GM12878 (cell line): ENCODE measurements at regions of chr6 and their contacts with region 1.

Region 1: DNA sequence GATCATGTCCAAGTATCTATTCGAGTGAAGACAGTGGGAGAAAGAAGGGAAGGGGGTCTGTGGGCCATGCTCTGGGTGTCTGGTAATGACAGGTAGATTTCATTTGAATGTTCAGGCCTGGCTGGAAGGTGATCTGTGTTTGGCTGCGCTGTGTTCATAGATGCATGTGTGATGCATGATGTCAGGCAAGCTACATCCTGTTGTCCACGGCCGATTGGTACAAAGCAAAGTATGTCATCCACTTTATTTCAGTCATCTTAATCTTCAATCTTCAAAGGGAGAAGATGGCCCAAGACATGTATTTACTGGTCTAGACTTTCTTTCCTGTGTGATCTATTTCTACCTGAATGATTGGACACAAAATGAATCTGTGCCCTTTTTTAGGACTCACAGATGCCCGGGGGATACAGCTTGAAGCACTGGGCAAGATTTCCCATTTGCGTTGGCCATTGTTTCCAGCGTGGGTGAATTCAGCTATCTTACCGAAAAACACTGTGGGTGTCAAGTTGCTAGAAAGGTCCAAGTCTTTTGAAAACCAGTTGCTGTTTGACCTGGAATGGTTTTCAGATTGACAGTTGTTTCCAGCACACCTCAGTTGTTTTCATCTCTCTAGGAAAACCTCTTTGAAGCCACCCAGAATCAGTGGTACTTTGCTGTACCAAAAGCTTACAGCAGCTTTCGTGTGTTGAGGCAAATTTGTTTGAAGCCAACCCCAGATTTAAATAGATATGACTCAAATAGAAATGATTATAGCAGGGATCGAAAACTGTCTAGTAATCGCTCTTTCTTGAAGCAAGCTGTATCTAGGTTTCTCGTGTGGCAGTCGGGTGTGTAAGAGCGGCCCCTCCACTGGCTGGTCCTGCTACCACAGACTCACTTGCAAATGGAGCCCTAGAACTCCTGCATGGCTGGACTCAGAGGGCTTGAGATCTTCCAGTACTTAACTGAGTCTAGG is 27.2 kb downstream of the DUSP22 start:
- DNase-seq: peak; percentile 95
- ATAC-seq: peak; percentile 50
- H3K4me3 ChIP-seq: peak overlapping the region; percentile 57
- H3K27ac ChIP-seq: peak overlapping the region; percentile 92
- H3K4me1 ChIP-seq: peaks cover 98% of the 10 kb centered on the region
- H3K27me3 ChIP-seq: no peaks in the 10 kb centered on the region
- CTCF ChIP-seq: no peak
- EP300 ChIP-seq: peak; percentile 72 to 85; a peak in 3 of 4 replicates
- POLR2A ChIP-seq: no peak
- RAD21 ChIP-seq: no peak

Region 2: DNA sequence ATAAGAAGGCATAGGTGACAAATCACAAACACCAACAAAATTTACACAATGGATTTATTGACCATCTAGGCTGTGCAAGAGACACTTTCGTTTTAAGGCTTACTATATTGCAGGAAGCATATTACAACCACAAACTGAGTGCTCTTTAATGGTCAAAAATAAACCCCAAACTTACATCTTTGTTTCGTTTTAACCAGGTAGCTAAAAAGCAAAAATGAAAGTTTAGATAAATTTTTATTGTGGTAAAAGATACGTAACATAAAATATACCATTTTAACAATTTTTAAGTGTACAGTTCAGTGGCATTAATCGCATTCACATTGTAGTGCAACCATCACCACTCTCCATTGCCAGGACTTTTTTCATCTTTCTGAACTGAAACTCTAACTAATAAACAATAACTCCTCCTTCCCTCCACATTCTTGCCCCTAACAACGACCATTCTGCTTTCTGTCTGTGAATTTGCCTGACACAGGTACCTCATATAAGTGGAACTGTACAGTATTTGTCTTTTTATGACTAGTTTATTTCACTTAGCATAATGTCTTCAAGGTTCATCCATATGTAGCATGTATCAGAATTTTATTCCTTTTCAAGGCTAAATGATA is 59.4 kb before region 1 on chr6:
- CTCF ChIA-PET with region 1: interaction called, 7 read pairs
- POLR2A ChIA-PET with region 1: interaction called, 4 read pairs
- RAD21 ChIA-PET with region 1: interaction called, 11 read pairs
- SMC1A ChIA-PET with region 1: interaction called, 6 read pairs
- in situ Hi-C with region 1: no loop called
- intact Hi-C with region 1: no loop called
- DNase-seq: peak; percentile 77
- ATAC-seq: peak; percentile 91
- H3K4me3 ChIP-seq: peak overlapping the region; percentile 20
- H3K27ac ChIP-seq: peak overlapping the region; percentile 82
- H3K4me1 ChIP-seq: peaks cover 37% of the 10 kb centered on the region
- H3K27me3 ChIP-seq: no peaks in the 10 kb centered on the region
- CTCF ChIP-seq: no peak
- EP300 ChIP-seq: no peak
- POLR2A ChIP-seq: no peak
- RAD21 ChIP-seq: no peak

Region 3: GRCh38 chr6:298233-299103 is 21.0 kb before region 1 on chr6:
- CTCF ChIA-PET with region 1: interaction called, 46 read pairs
- POLR2A ChIA-PET with region 1: interaction called, 61 read pairs
- RAD21 ChIA-PET with region 1: interaction called, 112 read pairs
- SMC1A ChIA-PET with region 1: interaction called, 221 read pairs
- in situ Hi-C with region 1: no loop called
- intact Hi-C with region 1: loop called (anchors 1 kb)
- DNase-seq: no peak
- ATAC-seq: peak; percentile 32
- H3K4me3 ChIP-seq: peak overlapping the region; percentile 63
- H3K27ac ChIP-seq: peak overlapping the region; percentile 100
- H3K4me1 ChIP-seq: peaks cover 66% of the 10 kb centered on the region
- H3K27me3 ChIP-seq: no peaks in the 10 kb centered on the region
- CTCF ChIP-seq: no peak
- EP300 ChIP-seq: no peak
- POLR2A ChIP-seq: no peak
- RAD21 ChIP-seq: no peak

Region 4: GRCh38 chr6:341914-342831 is 22.7 kb after region 1 on chr6:
- CTCF ChIA-PET with region 1: interaction called, 64 read pairs
- POLR2A ChIA-PET with region 1: interaction called, 150 read pairs
- RAD21 ChIA-PET with region 1: interaction called, 256 read pairs
- SMC1A ChIA-PET with region 1: interaction called, 707 read pairs
- in situ Hi-C with region 1: no loop called
- intact Hi-C with region 1: loop called (anchors 1 kb)
- DNase-seq: peak; percentile 92
- ATAC-seq: peak; percentile 72
- H3K4me3 ChIP-seq: peak overlapping the region; percentile 46; the same call in 1 of the 2 replicates
- H3K27ac ChIP-seq: peak overlapping the region; percentile 86
- H3K4me1 ChIP-seq: peaks cover 88% of the 10 kb centered on the region
- H3K27me3 ChIP-seq: no peaks in the 10 kb centered on the region
- CTCF ChIP-seq: no peak
- EP300 ChIP-seq: peak; percentile 99
- POLR2A ChIP-seq: no peak
- RAD21 ChIP-seq: 0 out of 2 replicates have a peak, but pooled peaks have one; percentile 34

Region 5: GRCh38 chr6:364609-365540 is 45.4 kb after region 1 on chr6:
- CTCF ChIA-PET with region 1: interaction called, 8 read pairs
- POLR2A ChIA-PET with region 1: interaction called, 3 read pairs
- RAD21 ChIA-PET with region 1: interaction called, 17 read pairs
- SMC1A ChIA-PET with region 1: interaction called, 13 read pairs
- in situ Hi-C with region 1: no loop called
- intact Hi-C with region 1: no loop called
- DNase-seq: peak; percentile 78
- ATAC-seq: peak; percentile 94
- H3K4me3 ChIP-seq: no peak overlapping the region
- H3K27ac ChIP-seq: peak overlapping the region; percentile 33
- H3K4me1 ChIP-seq: peaks cover 25% of the 10 kb centered on the region
- H3K27me3 ChIP-seq: no peaks in the 10 kb centered on the region
- CTCF ChIP-seq: no peak
- EP300 ChIP-seq: peak; percentile 37 to 88; a peak in 2 of 4 replicates
- POLR2A ChIP-seq: no peak
- RAD21 ChIP-seq: 0 out of 2 replicates have a peak, but pooled peaks have one; percentile 2

Region 6: DNA sequence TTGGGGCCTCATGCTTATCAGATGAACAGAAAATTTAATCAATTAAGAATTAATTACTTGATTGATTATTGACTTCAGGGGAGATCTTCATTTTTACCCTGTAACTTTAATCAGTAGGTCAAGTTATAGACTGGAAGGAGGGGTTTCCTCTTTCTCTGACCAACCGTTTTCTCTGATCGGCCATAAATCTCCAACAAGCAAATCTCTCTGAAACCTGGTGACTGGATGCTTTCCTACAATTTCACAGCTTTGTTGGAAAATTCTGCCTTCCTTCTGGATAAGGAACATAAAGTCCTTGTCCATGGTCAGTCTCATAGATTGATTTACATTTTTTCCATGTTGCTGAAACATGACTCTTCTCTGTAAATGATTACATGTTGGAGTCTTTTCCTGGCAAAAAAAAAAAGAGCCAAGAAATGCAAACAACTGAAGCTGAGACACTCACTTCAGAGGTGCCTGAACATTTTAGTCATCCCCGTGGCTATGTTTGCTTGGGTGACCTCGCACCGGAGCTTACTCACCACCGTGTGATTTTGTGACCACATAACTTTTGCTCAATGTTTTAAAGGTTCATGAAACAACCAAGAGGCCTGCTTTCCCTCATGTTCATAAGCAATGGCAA is 103.1 kb after region 1 on chr6:
- CTCF ChIA-PET with region 1: no interaction called
- POLR2A ChIA-PET with region 1: no interaction called
- RAD21 ChIA-PET with region 1: no interaction called
- SMC1A ChIA-PET with region 1: no interaction called
- in situ Hi-C with region 1: no loop called
- intact Hi-C with region 1: no loop called
- DNase-seq: no peak
- ATAC-seq: peak; percentile 98
- H3K4me3 ChIP-seq: no peak overlapping the region
- H3K27ac ChIP-seq: no peak overlapping the region
- H3K4me1 ChIP-seq: peaks cover 5% of the 10 kb centered on the region
- H3K27me3 ChIP-seq: no peaks in the 10 kb centered on the region
- CTCF ChIP-seq: no peak
- EP300 ChIP-seq: 0 out of 4 replicates have a peak, but pooled peaks have one; percentile 17 to 19
- POLR2A ChIP-seq: no peak
- RAD21 ChIP-seq: peak; percentile 23; the same call in 1 of the 2 replicates